ENCODE measurements at regions of chr10 and their contacts with region 1.

Region 1: GRCh38 chr10:71486484-71487114 is 89.9 kb downstream of the CDH23 start:
- DNase-seq: peak; percentile 19
- H3K4me3 ChIP-seq: no peak overlapping the region
- H3K27ac ChIP-seq: no peak overlapping the region
- H3K4me1 ChIP-seq: no peaks in the 10 kb centered on the region
- H3K27me3 ChIP-seq: no peaks in the 10 kb centered on the region
- CTCF ChIP-seq: peak; percentile 63 to 82

Region 2: GRCh38 chr10:71561003-71561574 is 74.5 kb after region 1 on chr10:
- CTCF ChIA-PET with region 1: no interaction called
- dilution Hi-C with region 1: no loop called
- in situ Hi-C with region 1: no loop called
- intact Hi-C with region 1: no loop called
- DNase-seq: no peak
- H3K4me3 ChIP-seq: no peak overlapping the region
- H3K27ac ChIP-seq: no peak overlapping the region
- H3K4me1 ChIP-seq: no peaks in the 10 kb centered on the region
- H3K27me3 ChIP-seq: peaks cover 3% of the 10 kb centered on the region
- CTCF ChIP-seq: no peak

Region 3: DNA sequence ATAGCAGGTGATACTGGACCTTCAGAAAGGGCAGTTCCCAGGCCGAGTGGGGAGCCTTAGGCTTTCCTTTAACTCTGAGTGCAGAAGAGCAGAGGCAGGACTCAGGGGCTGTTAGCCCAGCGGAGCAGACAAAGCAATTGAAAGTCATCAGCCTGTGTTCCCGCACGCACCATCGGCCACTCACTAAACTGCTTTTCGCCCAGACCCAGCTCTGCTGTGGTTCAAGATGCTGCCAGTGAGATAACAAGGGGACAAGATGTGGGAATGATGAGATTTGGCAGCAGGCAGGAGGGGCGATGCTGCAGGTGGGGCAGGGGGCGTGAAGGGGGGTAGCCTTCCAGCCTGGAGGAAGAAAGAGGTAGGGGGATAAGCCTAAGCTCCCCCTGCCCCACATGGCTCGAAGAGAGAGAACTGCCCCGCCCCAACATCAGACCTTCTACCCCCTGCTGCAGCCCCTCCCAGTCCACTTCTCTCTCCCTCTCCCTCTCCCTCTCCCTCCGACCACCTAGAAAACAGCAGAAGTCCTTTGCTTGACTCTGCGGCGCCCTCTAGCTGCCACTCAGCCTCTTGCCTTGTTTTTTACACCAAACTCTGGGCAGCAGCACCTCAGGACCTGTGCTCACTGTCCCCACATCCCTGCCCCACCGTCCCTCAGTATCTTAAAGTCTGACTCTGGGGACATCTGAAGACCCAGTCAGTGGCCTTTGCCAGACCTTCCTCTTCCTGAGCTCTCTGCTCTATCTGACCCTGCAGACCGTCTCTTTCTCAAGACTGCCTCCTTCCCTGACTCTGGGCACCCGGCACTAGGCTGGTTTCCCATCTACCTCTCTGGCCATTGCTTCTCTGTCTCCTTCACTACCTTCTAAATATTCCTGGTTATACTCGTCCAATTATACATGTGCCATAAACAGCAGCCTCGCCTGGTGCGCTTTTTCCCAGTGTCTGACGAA is 122.5 kb after region 1 on chr10:
- CTCF ChIA-PET with region 1: no interaction called
- dilution Hi-C with region 1: no loop called
- in situ Hi-C with region 1: no loop called
- intact Hi-C with region 1: loop called (anchors 1 kb)
- DNase-seq: peak; percentile 20
- H3K4me3 ChIP-seq: no peak overlapping the region
- H3K27ac ChIP-seq: no peak overlapping the region
- H3K4me1 ChIP-seq: no peaks in the 10 kb centered on the region
- H3K27me3 ChIP-seq: no peaks in the 10 kb centered on the region
- CTCF ChIP-seq: peak; percentile 86 to 87

Region 4: GRCh38 chr10:71708301-71708703 is 221.7 kb after region 1 on chr10:
- CTCF ChIA-PET with region 1: no interaction called
- dilution Hi-C with region 1: no loop called
- in situ Hi-C with region 1: no loop called
- intact Hi-C with region 1: loop called (anchors 2 kb)
- DNase-seq: no peak
- H3K4me3 ChIP-seq: no peak overlapping the region
- H3K27ac ChIP-seq: no peak overlapping the region
- H3K4me1 ChIP-seq: peaks cover 28% of the 10 kb centered on the region
- H3K27me3 ChIP-seq: no peaks in the 10 kb centered on the region
- CTCF ChIP-seq: peak; percentile 79 to 87

Region 5: DNA sequence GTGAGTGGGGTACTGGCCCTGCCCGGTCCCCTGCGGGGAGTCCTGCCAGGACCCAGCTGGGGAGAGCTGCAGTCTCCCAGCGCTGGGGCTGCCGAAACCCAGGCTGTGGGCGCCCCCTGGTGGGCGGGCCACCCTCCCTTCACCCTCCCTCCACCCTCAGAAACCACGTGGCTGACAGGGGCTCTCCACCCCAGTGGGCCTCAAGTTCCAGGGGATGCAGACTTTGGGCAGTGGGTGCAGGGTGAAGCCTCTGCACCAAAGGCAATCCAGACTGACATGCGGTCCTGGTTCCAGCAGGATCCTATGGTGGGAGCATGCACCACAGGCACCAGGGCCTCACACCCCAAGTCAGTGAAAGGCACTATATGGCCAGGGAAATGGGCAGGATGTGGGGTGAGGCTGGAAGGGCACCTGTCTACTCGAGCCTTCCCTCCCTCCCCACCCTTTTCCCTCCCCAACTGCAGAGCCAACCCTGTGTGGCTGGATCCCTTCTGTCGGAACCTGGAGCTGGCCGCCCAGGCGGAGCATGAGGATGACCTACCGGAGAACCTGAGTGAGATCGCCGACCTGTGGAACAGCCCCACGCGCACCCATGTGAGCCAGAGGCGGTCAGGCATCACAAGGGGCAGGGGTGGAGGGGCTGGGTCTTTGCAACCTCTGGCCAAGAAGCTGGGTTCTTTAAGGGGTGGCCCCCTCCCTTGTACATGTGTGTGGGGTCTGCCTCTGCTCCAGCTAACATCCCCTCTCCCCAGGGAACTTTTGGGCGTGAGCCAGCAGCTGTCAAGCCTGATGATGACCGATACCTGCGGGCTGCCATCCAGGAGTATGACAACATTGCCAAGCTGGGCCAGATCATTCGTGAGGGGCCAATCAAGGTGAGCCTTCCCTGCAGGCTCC is 325.7 kb after region 1 on chr10:
- CTCF ChIA-PET with region 1: no interaction called
- dilution Hi-C with region 1: no loop called
- in situ Hi-C with region 1: no loop called
- intact Hi-C with region 1: loop called (anchors 2 kb)
- DNase-seq: peak; percentile 29
- H3K4me3 ChIP-seq: no peak overlapping the region
- H3K27ac ChIP-seq: no peak overlapping the region
- H3K4me1 ChIP-seq: no peaks in the 10 kb centered on the region
- H3K27me3 ChIP-seq: no peaks in the 10 kb centered on the region
- CTCF ChIP-seq: peak; percentile 64 to 88

Region 6: GRCh38 chr10:71899665-71900412 is 413.2 kb after region 1 on chr10:
- CTCF ChIA-PET with region 1: no interaction called
- dilution Hi-C with region 1: no loop called
- in situ Hi-C with region 1: no loop called
- intact Hi-C with region 1: loop called (anchors 5 kb)
- DNase-seq: no peak
- H3K4me3 ChIP-seq: no peak overlapping the region
- H3K27ac ChIP-seq: no peak overlapping the region
- H3K4me1 ChIP-seq: peaks cover 4% of the 10 kb centered on the region
- H3K27me3 ChIP-seq: no peaks in the 10 kb centered on the region
- CTCF ChIP-seq: no peak